Mammary epithelial cell (primary cell): ENCODE measurements at regions of chr12 and their contacts with region 1.

Region 1: DNA sequence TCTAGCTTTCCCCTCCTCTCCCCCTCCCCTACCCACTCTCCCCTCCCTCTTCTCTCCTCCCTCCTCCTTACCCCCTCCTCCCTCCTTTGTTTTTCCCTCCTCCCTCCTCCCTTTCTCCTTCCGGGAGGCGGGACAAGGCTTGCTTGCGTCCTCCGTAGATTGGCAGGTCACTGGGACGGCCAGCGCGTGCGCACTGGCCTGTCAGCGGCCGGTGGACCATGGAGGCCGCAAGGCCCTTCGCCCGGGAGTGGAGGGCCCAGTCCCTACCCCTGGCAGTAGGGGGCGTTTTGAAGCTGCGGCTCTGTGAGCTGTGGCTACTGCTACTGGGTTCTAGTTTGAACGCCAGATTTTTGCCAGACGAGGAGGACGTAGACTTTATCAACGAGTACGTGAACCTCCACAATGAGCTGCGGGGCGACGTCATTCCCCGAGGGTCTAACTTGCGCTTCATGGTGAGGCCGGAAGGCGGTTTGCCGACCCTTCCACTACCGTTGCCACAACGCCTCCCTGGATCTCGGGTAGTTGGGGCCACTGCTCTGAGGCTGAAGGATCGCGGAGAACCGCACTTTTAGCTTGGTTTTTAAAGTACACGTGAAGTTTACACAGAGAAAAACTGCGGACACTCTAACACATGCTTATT is at the start of gene GLIPR1L2:
- DNase-seq: peak; percentile 98
- H3K4me3 ChIP-seq: peak within 1 kb of the TSS; percentile 50 to 80 (median 54)
- H3K27ac ChIP-seq: peak within 1 kb of the TSS; percentile 80
- H3K4me1 ChIP-seq: peaks cover 20% of the 10 kb centered on the region
- H3K27me3 ChIP-seq: no peaks in the 10 kb centered on the region
- CTCF ChIP-seq: peak; percentile 76 to 95
- total RNA-seq, gene GLIPR1L2: 0.80 to 1.2 TPM

Region 2: DNA sequence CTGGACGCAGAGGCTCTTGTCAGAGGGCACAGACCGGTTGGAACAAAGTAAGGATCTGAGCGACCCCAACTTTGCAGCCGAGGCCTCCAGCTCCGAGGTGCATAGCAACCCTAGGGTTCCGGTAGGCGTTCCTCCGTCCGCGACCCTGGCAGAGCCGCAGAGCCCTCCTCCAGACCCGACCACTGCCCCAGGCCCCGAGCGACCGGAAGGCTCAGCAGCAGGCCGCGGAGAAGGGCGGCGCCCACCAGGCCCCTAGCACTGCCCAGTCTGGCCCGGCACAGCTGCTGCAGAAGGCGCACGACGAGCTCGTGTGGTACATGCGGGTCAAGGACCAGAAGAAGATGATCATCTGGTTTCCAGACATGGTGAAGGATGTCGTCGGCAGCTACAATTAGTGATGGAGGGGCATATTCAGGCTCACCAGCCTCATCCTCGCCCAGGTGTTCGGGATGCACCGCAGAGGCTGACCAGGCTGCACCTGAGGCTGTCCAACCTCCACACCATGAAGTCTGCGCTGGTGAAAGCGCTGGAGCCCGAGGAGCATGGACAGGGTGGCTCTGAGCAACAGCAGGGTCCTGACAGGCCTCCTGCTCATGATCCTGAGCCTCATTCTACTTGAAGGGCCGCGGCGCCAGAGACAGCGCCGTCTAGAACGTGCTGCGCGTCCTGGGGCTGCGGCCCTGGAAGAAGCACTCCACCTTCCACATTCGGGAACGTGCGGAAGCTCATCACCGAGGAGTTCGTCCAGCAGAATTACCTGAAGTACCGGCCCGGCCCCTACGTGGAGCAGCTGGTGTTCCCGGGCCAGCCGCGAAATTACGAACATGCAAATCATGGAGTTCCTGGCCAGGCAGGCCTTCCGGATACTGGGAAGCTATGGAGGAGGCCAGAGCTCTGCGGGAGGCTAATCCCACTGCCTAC is 85.3 kb before region 1 on chr12:
- CTCF ChIA-PET with region 1: no interaction called
- dilution Hi-C with region 1: no loop called
- in situ Hi-C with region 1: no loop called
- intact Hi-C with region 1: no loop called
- DNase-seq: no peak
- H3K4me3 ChIP-seq: no peak overlapping the region
- H3K27ac ChIP-seq: no peak overlapping the region
- H3K4me1 ChIP-seq: no peaks in the 10 kb centered on the region
- H3K27me3 ChIP-seq: no peaks in the 10 kb centered on the region
- CTCF ChIP-seq: no peak

Region 3: DNA sequence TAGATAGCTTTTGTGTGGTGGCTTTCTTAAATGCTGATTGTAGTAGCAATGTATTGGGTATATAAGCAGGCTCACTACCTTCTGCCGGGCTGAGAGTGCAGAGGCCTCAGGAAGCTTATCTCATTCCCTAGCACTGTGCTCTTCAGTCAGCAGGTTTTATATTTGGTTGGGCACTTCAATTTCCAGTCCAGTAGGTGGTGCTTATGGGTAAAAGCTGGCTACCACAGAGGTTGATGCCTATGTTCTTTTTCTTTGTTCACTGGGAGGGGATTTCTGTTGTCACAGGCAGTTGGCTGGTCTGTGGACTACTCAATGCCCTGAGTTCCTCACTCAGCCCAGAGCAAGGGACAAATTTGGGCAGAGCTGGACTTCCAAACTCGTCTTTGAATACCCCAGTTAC is 46.5 kb after region 1 on chr12:
- CTCF ChIA-PET with region 1: interaction called, 22 read pairs
- dilution Hi-C with region 1: no loop called
- in situ Hi-C with region 1: no loop called
- intact Hi-C with region 1: no loop called
- DNase-seq: peak; percentile 53
- H3K4me3 ChIP-seq: no peak overlapping the region
- H3K27ac ChIP-seq: no peak overlapping the region
- H3K4me1 ChIP-seq: peaks cover 19% of the 10 kb centered on the region
- H3K27me3 ChIP-seq: no peaks in the 10 kb centered on the region
- CTCF ChIP-seq: peak; percentile 30 to 52

Region 4: DNA sequence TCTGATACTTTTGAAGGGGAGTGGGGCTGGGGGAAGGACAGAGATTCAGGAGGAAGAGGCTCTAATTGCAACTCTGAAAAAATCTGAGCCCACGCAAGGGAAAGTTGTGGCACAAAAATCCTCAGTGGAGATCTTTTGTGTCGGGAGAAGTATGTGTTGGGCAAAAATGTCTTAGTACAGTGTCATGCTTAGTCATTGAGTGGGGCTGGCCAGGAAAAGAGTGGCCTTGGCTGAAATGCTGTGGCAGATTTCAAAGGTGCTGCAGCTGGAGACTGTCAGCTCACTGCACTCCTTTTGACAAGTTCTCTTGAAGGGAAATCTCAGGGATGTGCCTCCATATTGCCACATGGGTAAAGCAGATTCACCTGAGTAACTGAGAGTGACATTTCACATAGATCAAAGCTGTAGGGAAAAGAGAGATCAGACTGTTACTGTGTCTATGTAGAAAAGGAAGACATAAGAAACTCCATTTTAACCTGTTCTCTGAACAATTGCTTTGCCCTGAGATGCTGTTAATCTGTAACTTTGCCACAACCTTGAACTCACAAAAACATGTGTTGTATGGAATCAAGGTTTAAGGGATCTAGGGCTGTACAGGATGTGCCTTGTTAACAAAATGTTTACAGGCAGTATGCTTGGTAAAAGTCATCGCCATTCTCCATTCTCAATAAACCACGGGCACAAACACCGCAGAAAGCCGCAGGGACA is 53.6 kb after region 1 on chr12:
- CTCF ChIA-PET with region 1: no interaction called
- dilution Hi-C with region 1: no loop called
- in situ Hi-C with region 1: no loop called
- intact Hi-C with region 1: loop called (anchors 5 kb)
- DNase-seq: peak; percentile 64
- H3K4me3 ChIP-seq: no peak overlapping the region
- H3K27ac ChIP-seq: no peak overlapping the region
- H3K4me1 ChIP-seq: peaks cover 34% of the 10 kb centered on the region
- H3K27me3 ChIP-seq: no peaks in the 10 kb centered on the region
- CTCF ChIP-seq: no peak

Region 5: GRCh38 chr12:75480469-75480949 is 89.5 kb after region 1 on chr12 and contains the start of gene GLIPR1:
- CTCF ChIA-PET with region 1: interaction called, 9 read pairs
- dilution Hi-C with region 1: no loop called
- in situ Hi-C with region 1: no loop called
- intact Hi-C with region 1: loop called (anchors 1 kb)
- DNase-seq: peak; percentile 95
- H3K4me3 ChIP-seq: peak within 1 kb of the TSS; percentile 49 to 71 (median 67)
- H3K27ac ChIP-seq: peak within 1 kb of the TSS; percentile 85
- H3K4me1 ChIP-seq: peaks cover 41% of the 10 kb centered on the region
- H3K27me3 ChIP-seq: no peaks in the 10 kb centered on the region
- CTCF ChIP-seq: no peak
- total RNA-seq, gene GLIPR1: 92.4 to 96.0 TPM

Region 6: GRCh38 chr12:75505706-75506312 is 114.8 kb after region 1 on chr12:
- CTCF ChIA-PET with region 1: interaction called, 3 read pairs
- dilution Hi-C with region 1: no loop called
- in situ Hi-C with region 1: no loop called
- intact Hi-C with region 1: loop called (anchors 5 kb)
- DNase-seq: no peak
- H3K4me3 ChIP-seq: no peak overlapping the region
- H3K27ac ChIP-seq: no peak overlapping the region
- H3K4me1 ChIP-seq: peaks cover 13% of the 10 kb centered on the region
- H3K27me3 ChIP-seq: no peaks in the 10 kb centered on the region
- CTCF ChIP-seq: peak; percentile 56 to 88